Activated CD4-positive, alpha-beta T cell treated with anti-CD3 and anti-CD28 coated beads for 36 hours (primary cell): ENCODE measurements at regions of chr13 and their contacts with region 1.

Region 1: GRCh38 chr13:24228852-24229458 is 68.4 kb downstream of the SPATA13 start:
- DNase-seq: peak; percentile 54
- ATAC-seq: peak; percentile 34
- H3K4me3 Mint-ChIP-seq: no peak overlapping the region
- H3K27ac Mint-ChIP-seq: no peak overlapping the region
- H3K4me1 Mint-ChIP-seq: peaks cover 31% of the 10 kb centered on the region
- H3K27me3 Mint-ChIP-seq: no peaks in the 10 kb centered on the region

Region 2: GRCh38 chr13:23921451-23921888 is 307.5 kb before region 1 on chr13:
- CTCF ChIA-PET with region 1: interaction called, 7 read pairs
- POLR2A ChIA-PET with region 1: no interaction called
- intact Hi-C with region 1: loop called in 1 of 2 experiments (anchors 2 kb)
- DNase-seq: no peak
- ATAC-seq: peak; percentile 36
- H3K4me3 Mint-ChIP-seq: no peak overlapping the region
- H3K27ac Mint-ChIP-seq: no peak overlapping the region
- H3K4me1 Mint-ChIP-seq: no peaks in the 10 kb centered on the region
- H3K27me3 Mint-ChIP-seq: peaks cover 23% of the 10 kb centered on the region

Region 3: DNA sequence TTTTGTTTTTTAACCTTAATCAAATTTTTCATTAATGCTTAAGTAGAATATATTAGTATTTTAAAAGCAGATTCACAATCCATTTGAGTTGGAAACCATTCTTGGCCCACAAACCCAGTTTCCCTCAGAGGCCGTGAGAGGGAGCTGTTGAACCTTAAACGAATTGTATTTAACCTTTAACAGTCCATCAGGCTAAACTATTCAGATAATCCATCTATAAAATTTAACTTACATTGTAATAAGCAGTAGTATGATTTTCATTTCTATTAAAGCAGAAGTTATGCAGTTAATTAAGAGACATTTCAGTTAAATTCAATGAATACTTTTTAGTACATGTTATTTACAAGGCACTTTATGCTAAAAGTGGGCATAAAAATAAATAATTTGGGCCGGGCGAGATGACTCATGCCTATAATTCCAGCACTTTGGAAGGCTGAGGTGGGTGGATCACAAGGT is 208.6 kb before region 1 on chr13:
- CTCF ChIA-PET with region 1: interaction called, 33 read pairs
- POLR2A ChIA-PET with region 1: no interaction called
- intact Hi-C with region 1: loop called in 1 of 2 experiments (anchors 2 kb)
- DNase-seq: peak; percentile 61
- ATAC-seq: no peak
- H3K4me3 Mint-ChIP-seq: no peak overlapping the region
- H3K27ac Mint-ChIP-seq: no peak overlapping the region
- H3K4me1 Mint-ChIP-seq: no peaks in the 10 kb centered on the region
- H3K27me3 Mint-ChIP-seq: no peaks in the 10 kb centered on the region

Region 4: DNA sequence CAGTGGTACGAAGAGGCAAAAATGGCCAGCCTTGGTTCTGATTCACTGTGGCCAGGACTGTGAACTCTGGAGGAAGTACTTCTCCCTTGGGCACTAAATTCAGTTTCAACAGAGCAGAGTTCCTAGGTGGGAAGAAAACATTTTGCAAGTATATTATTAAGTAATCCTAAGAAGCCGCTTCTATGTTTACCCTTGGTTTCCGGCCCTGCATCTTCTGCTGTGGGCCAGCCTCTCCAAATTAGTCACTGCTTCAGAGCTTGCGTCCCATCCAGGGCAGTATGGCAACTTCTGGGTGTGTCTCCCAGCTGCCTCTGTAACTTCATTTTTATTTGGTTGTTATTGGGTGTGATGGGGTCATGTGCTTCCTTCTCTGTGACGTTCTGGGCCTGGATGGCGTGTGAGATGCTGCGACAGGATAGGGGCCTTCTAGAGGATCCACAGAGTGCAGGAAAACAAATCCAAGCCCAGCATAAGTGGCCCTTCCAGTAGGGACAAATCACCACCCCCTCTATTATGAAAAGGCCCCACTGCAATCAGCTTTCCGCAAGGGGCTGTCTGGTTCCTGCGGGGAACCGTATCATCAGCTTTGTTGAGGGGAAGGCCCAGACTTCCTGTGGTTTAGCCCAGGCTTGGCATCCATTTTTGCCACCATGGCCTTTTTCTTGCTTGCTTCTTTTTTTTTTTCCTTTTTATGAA is 25.3 kb after region 1 on chr13:
- CTCF ChIA-PET with region 1: interaction called, 8 read pairs
- POLR2A ChIA-PET with region 1: no interaction called
- intact Hi-C with region 1: loop called (anchors 1 to 2 kb)
- DNase-seq: peak; percentile 76
- ATAC-seq: peak; percentile 61
- H3K4me3 Mint-ChIP-seq: peak overlapping the region; percentile 95
- H3K27ac Mint-ChIP-seq: peak overlapping the region; percentile 96
- H3K4me1 Mint-ChIP-seq: peaks cover 88% of the 10 kb centered on the region
- H3K27me3 Mint-ChIP-seq: no peaks in the 10 kb centered on the region

Region 5: DNA sequence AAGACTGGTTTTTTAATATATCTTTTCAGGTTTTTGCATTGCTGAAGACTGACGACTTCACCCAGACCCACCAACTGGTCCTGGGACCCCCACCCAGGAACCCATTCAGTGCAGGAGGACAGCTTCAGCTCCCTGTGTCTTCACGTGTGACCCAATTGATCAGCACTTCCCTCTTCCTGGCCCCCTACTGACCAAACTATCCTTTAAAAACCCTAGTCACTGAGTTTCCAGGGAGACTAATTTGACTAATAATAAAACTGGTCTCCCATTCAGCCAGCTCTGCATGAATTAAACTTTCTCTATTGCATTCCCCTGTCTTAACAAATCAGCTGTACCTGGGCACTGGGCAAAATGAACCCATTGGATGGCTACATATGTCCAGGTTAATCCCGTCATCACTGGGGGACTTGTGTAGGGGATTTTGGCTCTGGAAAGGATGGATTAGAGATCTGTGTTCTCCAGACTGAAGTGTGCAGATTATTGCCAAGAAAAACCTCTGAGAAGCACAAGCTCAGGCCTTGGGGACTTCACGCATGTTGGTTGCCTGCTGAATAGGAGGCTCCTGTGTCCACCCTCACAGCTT is 300.0 kb after region 1 on chr13:
- CTCF ChIA-PET with region 1: no interaction called
- POLR2A ChIA-PET with region 1: no interaction called
- intact Hi-C with region 1: no loop called
- DNase-seq: no peak
- ATAC-seq: no peak
- H3K4me3 Mint-ChIP-seq: no peak overlapping the region
- H3K27ac Mint-ChIP-seq: no peak overlapping the region
- H3K4me1 Mint-ChIP-seq: no peaks in the 10 kb centered on the region
- H3K27me3 Mint-ChIP-seq: peaks cover 31% of the 10 kb centered on the region